Aorta (tissue), 5 donors: ENCODE measurements at regions of chr19 and their contacts with region 1.

Region 1: DNA sequence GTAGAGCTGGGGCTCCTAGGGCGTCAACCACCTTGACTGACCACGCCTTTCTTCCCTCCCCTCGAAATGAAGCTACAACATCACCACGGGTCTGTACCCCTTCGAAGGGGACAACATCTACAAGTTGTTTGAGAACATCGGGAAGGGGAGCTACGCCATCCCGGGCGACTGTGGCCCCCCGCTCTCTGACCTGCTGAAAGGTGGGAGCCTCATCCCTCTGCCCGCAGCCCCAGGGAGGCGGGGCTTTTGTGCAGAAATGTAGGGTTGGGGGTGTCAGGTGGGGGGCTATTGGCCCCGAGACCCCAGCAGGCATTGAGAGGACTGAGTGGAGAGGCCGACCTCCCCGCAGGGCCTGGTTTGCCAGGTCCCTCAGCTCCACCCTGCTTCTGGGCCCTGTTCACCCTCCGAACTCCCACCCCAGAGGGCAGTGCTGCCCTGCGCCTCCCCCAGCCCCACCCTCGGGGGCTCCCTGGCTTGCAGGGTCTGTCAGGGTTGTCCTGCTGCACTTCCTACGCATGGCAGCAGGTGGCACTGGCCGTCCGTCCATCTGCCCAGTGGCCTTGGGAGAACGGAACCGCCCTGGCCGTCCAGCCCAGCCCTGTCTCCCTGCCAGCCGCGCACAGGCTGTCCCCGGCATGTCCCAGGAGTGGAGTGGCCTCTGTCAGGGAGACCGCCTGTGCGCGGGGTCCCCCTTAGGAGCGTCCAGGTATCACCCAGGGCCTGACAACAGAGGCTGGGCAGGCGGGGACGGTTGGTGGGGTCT is 15.7 kb downstream of the STK11 start:
- DNase-seq: peak; percentile 82 to 93
- ATAC-seq: peak; percentile 68
- H3K4me3 ChIP-seq: no peak overlapping the region
- H3K27ac ChIP-seq: no peak overlapping the region
- H3K4me1 ChIP-seq: no peaks in the 10 kb centered on the region
- H3K27me3 ChIP-seq: no peaks in the 10 kb centered on the region

Region 2: DNA sequence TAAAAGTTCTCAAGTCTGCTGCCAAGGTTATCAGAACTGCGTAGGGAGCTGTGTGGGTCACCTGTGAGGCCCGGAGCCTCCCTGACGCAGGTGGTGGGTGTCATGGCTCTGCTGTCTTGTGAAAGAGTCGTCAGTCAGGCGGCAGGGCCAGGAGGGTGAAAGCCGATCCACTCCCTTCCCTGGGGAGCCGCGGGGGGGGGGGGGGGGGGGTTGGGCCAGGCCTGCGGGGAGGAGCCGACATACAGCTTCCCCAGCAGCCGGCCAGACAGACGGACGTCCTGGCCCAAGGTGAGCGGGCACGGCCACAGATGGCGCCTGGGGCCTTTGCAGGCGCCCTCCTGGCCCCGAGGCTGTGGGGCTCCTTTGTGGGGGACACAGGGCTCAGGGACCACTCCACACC is 59.6 kb before region 1 on chr19:
- intact Hi-C with region 1: no loop called
- DNase-seq: no peak
- ATAC-seq: no peak
- H3K4me3 ChIP-seq: no peak overlapping the region
- H3K27ac ChIP-seq: no peak overlapping the region
- H3K4me1 ChIP-seq: no peaks in the 10 kb centered on the region
- H3K27me3 ChIP-seq: no peaks in the 10 kb centered on the region

Region 3: GRCh38 chr19:1205114-1206062 is 15.9 kb before region 1 on chr19 and contains the start of gene STK11:
- intact Hi-C with region 1: no loop called
- DNase-seq: peak; percentile 99 to 100
- ATAC-seq: peak; percentile 96
- H3K4me3 ChIP-seq: peak within 1 kb of the TSS; percentile 91 to 96
- H3K27ac ChIP-seq: peak within 1 kb of the TSS; percentile 32 to 35
- H3K4me1 ChIP-seq: no peaks in the 10 kb centered on the region
- H3K27me3 ChIP-seq: no peaks in the 10 kb centered on the region
- total RNA-seq, gene STK11: 39.4 to 59.5 TPM

Region 4: DNA sequence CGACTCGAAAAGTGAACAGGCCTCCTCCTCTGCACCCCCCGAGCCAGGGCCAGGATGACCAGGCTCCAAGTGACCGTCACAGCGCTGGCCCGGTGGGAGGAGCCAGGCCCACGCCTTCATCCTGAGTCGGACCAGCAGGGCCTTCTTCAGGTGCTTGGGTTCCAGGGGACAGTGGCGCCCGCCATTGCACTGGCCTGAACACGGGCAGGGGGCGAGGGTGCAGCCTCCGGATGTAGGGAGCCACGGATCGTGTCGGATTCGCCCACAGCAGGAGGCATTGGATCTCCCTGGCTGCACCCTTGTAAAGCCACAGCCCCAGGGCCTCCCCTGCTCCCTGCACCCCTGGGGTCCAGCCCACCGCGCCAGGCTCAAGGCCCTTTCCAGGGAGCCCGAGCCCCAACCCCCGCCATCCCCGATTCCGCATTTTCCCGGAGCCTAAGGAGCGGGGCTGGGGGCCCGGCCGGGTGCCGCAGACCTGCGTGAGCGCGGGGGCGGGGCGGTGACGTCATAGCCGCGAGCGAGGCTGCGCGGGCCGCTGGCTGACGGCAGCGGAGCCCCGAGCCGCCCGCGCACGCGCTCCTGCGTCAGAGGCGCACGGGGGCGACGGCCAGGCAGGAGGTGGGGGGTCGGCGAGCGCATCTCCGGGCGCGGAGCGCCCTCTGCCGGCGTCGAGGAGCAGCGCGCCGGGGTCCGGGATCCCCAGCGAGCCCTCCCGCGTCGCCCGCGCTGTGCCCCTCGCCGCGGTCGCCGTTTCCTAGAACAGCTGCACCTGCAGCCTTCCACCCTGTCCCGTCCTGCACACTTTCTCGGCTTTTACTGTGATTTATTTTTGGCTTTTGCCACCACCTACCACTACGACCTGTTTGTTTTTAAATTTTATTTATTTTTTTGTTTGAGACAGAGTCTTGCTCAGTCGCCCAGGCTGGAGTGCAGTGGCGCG is 18.7 kb after region 1 on chr19:
- intact Hi-C with region 1: loop called in 1 of 2 experiments (anchors 2 kb)
- DNase-seq: peak; percentile 91 to 97
- ATAC-seq: peak; percentile 76
- H3K4me3 ChIP-seq: no peak overlapping the region
- H3K27ac ChIP-seq: peak overlapping the region; percentile 63 to 64
- H3K4me1 ChIP-seq: no peaks in the 10 kb centered on the region
- H3K27me3 ChIP-seq: no peaks in the 10 kb centered on the region

Region 5: DNA sequence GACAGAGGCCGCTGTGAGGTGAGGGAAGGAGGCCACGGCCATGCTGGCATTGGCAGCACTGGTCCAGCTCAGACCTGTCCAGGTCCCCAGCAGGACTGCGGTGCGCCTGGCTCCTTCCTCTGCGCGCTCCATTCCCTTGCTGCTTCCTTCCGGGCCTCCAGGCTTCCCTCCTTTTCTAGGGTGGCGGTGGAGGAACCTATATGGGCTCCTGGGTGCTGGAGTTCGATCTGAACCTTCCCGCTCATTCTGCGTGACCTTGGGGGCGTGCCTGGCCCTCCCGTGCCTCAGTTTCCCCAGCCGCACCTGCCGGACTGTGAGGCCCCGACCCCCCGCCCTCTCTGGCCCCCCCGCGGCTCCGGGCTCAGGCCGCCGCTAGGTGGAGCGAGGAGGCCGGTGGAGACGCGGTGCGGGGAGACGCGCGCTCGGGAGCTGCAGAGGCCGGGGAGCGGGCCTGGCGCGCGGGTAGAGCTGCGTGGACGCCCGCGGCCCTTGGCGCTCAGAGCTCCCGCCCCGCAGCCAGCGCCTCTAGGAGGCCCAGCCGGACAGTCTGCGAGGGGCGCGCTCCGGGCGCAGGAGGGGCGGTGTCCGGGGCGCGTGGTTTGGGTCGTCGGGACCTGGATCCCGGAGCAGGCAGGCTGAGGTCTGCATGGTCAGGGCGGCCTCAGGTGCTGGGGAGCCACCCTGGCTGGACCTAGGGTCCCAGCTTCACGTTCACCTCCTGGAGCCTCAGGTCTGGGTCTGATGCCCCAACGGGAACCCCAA is 94.3 kb after region 1 on chr19:
- intact Hi-C with region 1: no loop called
- DNase-seq: no peak
- ATAC-seq: peak; percentile 59
- H3K4me3 ChIP-seq: no peak overlapping the region
- H3K27ac ChIP-seq: no peak overlapping the region
- H3K4me1 ChIP-seq: no peaks in the 10 kb centered on the region
- H3K27me3 ChIP-seq: peaks cover 0 to 4% of the 10 kb centered on the region in 2 donors